Spleen (tissue), 13 donors: ENCODE measurements at regions of chr2 and their contacts with region 1.

Region 1: GRCh38 chr2:164061129-164061746 is 325.4 kb upstream of the FIGN start:
- DNase-seq: no peak
- H3K4me3 ChIP-seq: no peak overlapping the region
- H3K27ac ChIP-seq: no peak overlapping the region
- H3K4me1 ChIP-seq: no peaks in the 10 kb centered on the region
- H3K27me3 ChIP-seq: no peaks in the 10 kb centered on the region
- CTCF ChIP-seq: peak in 9 of 11 experiments; percentile 34 to 61 (median 49)
- POLR2A ChIP-seq: no peak

Region 2: GRCh38 chr2:163191372-163191771 is 869.9 kb before region 1 on chr2:
- intact Hi-C with region 1: loop called (anchors 5 kb)
- DNase-seq: no peak
- H3K4me3 ChIP-seq: no peak overlapping the region
- H3K27ac ChIP-seq: no peak overlapping the region
- H3K4me1 ChIP-seq: no peaks in the 10 kb centered on the region
- H3K27me3 ChIP-seq: no peaks in the 10 kb centered on the region
- CTCF ChIP-seq: peak in 8 of 11 experiments; percentile 30 to 58 (median 47)
- POLR2A ChIP-seq: no peak